ENCODE measurements at regions of chr12 and their contacts with region 1.

Region 1: DNA sequence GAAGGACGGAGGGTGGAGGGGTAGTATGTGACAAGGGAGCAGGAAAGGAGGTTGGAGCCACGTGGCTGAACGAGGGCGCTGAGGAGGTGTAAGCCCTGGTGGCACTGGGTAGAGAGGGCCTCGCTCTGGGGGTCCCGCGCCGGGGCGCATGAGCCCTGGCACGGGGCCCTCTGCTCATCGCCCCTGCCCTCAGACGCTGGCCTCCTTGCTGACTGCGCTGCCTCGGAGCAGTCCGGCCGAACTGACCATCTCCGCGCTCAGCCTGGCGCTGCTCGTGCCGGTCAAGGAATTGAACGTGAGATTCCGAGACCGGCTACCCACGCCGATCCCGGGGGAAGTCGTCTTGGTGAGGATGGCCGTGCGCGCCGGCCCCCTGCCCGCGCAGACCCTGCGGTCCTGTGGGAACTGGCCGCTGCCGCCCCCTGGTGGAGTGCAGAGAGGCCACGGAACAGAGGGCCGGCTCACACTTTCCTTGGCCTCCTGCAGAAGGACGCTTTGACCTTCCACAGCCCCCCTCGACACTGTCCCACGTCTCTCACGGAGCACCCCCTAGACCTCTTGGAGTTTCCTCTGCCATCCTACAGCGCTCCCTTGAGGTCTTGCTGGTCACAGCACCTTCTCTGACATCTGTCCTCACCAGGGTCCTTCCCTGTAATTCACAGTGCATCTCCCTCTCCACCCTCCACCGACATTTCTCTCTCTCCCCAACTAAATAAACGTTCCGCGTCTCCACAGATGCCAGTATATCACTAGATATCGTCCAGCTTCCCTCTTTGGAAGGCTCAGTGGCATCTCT is 10.5 kb downstream of the ARHGEF25 start:
- DNase-seq: peak; percentile 83
- ATAC-seq: peak; percentile 77

Region 2: GRCh38 chr12:57299514-57300016 is 322.1 kb before region 1 on chr12:
- intact Hi-C with region 1: no loop called
- DNase-seq: no peak
- ATAC-seq: peak; percentile 64

Region 3: DNA sequence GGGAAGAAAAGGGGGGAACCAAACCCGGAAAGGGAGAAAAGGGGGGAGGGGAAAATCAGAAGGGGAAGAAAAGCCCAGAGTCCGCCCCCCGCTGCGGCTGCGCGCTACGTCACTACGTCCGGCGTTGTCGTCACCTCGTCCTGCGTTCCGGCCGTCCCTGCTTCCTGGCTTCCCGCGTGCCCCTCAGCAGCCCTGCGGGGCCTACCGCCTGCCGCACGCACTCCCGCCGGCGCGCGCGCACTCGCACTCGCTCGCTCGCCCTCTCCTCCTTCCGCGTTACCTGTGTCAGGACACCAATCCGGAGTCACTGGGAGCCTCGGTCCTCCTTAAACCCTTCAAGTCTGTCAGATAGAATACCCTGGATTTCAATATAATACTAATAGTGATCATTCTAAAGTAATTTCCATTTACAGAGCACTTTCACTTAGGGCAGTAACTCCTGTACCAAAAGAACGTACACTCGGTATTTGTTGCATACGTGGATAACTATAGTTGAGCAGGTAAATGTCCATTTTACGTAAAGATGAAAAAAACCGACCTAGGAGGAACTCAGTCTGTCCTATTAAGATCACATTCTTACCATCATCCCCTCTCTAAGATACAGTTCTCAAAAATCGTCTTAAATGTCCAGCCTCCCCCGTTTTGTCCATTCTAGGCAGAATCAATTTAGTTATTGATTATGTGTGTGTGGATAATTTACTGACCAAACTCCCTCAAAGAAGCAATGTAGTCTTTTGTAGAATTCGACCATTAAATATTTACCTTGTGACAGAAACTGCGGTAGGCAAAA is 190.6 kb before region 1 on chr12 and contains the start of gene R3HDM2:
- intact Hi-C with region 1: no loop called
- DNase-seq: peak; percentile 98
- ATAC-seq: peak; percentile 98
- total RNA-seq, gene R3HDM2: 54.4 TPM

Region 4: DNA sequence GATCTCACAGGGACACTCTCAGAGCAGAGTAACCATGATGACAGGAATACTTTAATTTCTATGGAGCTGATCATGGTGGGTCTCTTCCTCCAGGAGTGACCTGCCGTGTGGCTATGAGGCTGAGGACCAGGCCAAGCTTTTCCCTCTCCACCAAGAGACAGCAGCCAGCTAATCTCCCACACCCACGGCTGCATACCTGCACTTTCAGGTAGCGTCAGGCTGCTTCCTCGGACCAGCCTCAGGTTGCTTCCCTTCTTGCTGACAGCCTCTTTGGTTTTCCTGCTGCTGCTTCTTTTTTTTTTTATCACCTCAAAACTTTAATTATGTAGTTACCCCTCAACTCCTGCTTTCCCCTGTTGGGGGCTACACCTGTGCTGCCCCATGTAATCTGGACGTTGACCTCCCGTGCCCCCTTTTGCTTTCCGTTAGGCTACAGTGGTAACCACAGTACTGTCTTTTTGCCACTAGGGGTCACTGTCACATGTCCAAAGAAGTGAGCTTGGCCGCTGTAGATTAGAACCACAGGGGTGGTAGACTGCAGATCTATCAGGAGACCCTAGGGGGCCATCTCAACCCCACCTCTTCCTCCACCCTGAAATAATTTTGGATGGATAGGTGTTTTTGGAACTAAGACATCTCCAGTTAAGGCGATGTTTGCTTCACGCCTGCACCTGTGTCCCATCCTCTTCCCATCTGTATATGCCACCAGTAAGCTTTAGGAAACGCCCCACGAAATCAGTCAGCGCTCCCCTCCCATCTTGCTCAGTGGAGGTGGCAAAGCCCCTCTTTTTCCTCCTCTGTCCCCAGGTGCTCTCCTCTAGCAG is 38.5 kb before region 1 on chr12:
- intact Hi-C with region 1: loop called (anchors 5 kb)
- DNase-seq: no peak
- ATAC-seq: peak; percentile 97

Measured in left ventricle myocardium superior (tissue), 1 donor.